ENCODE measurements at regions of chr1 and their contacts with region 1.

Region 1: DNA sequence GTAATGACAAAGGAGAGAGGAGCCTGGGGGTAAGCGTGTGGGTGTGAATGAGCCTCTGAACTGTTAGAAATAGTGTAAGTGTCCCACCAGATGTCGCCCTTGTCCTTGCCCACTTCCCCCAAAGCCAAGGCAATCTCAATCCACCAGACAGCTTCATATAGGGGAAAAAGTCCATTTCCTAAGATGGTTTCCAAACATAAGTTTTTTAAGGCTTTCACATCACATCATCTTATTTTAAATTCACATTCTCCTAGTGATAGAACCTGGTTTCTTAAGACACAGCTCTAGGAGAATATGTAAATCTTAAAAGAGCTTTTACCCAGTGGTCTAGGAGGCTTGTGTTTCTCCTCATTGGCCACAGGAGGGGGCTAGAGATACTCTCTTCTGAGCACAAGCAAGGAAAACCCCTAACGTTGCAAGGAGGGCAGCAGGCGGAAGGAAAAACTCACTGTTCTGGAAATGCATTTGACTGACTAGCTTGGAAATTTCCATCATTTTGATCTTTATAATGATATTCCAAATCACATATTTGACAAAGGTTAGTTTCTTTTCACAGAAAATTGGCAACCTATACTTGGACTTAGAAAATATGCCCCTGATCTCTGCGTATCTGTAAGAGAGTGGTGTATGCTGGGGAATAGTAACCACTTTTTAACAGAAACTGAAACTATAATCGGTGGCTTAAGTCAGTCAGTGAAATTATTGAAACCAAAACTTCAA is 51.9 kb upstream of the LPAR3 start:
- DNase-seq: peak; percentile 63
- CTCF ChIP-seq: peak; percentile 86

Region 2: GRCh38 chr1:84930329-84930728 is 14.6 kb before region 1 on chr1:
- CTCF ChIA-PET with region 1: interaction called, 35 read pairs
- POLR2A ChIA-PET with region 1: no interaction called
- DNase-seq: no peak
- CTCF ChIP-seq: no peak

Region 3: DNA sequence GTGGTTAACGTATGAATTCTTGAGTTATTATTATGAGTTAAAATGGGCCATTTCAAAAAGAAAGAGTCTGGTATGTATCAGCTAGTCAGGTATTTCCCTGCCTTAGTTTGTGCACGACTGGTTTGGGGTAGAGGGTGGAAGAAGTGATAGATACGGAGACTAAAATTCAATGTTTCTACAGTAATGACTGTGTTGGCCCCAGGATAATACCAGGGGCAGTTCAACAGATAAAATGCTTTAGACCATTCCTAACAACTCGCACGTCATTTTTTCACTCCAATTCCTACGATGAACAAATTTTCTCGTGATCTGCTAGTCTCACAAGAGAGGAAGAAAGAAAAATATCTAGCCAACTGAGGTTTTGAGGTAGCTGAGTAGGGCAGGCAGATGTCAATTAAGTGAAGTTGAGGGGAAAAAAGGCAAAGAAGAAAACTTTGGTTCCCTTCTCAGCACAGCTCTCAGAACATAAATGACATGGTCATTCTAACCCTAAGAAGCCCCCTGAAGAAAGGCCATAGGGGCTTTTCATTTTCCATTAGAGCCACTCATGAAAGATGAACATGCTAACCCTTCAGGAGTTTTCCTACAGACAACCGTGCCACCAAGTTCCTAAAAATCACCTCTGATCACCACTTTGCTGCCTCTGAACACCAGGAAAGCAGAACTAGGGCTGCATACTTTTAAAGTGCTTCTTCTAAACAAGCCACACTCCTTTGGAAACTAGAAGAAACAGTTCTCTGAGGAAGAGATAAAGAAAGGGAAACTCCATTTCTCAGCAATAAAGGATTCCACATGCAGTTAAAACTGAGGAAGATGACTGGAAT is 46.4 kb after region 1 on chr1:
- CTCF ChIA-PET with region 1: interaction called, 24 read pairs
- POLR2A ChIA-PET with region 1: no interaction called
- DNase-seq: peak; percentile 25
- CTCF ChIP-seq: no peak

Region 4: GRCh38 chr1:85033221-85033620 is 88.3 kb after region 1 on chr1:
- CTCF ChIA-PET with region 1: interaction called, 159 read pairs
- POLR2A ChIA-PET with region 1: no interaction called
- DNase-seq: no peak
- CTCF ChIP-seq: no peak

Region 5: DNA sequence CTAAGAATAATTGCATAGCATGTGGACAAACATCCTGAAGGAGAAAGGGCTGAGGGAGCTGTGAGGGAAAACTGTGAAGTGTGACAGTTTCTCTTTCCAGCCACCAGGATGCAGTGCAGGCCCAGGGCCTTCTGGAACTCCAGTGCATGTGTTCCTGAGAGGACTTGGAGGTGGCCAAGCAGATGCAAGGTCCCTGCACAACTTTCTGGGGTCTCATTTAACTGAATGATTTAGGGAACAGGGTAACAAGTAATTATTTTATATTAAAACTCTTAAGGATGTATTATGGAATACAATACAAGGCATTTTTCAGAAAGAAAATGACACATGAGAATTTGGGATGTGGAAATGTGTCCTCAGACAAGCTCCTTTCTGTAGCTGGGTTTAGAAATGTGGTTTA is 164.5 kb after region 1 on chr1:
- CTCF ChIA-PET with region 1: interaction called, 19 read pairs
- POLR2A ChIA-PET with region 1: no interaction called
- DNase-seq: peak; percentile 64
- CTCF ChIP-seq: peak; percentile 69

Region 6: DNA sequence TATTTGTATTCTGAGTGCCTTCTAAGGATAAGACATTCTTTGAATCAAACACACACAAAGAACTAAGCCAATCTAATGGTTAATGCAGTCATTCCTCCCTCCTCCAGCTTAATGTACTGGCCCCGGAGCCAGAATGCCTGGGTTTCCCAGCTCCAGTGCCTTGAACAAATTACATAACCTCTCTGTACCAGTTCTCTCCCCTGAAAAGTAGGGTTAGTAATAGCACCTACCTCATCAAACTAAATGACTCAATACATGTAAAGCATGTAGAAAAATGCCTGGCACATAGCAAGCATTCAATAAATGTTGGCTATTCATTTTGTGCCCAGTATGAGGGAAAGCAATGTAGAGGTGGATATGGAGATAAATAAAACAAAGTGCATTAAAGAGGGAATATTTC is 300.5 kb after region 1 on chr1:
- CTCF ChIA-PET with region 1: interaction called, 12 read pairs
- POLR2A ChIA-PET with region 1: no interaction called
- DNase-seq: no peak
- CTCF ChIP-seq: no peak

Region 7: DNA sequence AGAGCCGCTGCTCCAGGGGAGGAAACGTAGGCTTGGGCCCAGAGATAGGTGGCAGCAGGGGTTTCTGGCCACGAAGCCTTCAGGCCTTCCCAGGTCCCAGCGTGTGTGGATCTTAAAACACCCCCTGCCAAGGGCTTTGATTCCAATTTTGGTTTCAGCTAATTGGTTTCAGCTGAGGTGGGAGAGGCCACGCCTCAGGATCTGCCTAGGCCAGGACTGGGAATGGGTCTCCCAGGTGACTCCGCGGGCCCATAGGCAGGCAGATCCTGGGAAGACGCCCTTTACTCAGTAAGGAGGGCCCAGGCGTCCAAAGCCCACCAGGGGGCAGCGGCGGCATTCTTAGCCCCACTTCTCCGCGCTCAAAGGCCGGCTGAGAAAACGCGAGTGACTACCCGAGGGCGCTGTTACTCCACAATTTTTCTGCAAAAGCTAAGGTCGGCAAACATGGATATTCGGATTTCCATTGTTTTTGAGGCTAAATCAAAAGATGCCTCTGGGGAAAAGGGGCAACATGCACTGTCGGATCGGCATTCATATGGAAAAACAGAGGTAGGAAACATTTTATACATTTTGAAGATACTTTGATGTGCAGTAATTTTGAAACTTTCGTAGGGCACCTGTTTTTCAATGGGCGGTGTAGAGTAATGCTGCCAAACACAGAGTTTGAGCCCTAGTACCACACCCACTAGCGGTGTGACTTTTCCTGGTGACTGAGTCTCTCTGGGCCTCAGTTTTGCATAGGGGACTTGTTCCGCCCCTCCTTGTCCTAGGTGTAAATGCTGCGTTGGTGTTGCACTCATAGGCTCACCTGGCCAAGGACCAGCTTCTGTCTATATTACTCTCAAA is 363.3 kb after region 1 on chr1:
- CTCF ChIA-PET with region 1: no interaction called
- POLR2A ChIA-PET with region 1: no interaction called
- DNase-seq: peak; percentile 66
- CTCF ChIP-seq: peak; percentile 87